Right ventricle myocardium inferior (tissue), 1 donor: ENCODE measurements at regions of chr4 and their contacts with region 1.

Region 1: GRCh38 chr4:121597346-121597934 is 99.3 kb downstream of the ANXA5 start:
- DNase-seq: no peak
- ATAC-seq: no peak

Region 2: DNA sequence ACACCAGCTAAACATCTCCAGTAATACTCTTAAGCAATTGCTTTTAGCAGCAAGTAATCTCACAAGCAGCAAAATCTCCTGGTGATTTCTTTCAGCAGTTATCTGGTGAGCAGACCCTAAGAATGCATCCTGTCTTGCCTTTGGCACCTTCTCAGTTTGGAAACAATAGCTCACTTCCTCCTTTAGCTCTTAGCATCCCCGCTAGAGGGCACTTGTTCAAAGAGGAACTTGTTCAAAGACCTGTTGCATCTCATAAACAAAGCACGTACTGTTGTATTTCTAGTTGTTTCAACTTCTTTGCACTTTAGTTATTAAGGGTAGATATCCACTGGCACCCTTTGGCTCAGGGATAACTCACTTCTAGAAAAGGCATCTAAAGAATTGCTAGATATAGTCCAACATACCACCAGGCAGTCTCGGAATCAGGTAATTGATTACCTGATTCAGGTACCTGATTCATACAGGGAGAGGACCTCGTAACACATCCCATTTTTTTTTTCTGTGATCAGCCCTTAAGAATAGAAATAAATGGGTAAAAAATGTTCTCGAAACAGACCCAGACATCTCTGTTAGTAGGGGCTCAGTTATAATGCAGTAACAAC is 134.7 kb before region 1 on chr4:
- intact Hi-C with region 1: loop called (anchors 5 kb)
- DNase-seq: no peak
- ATAC-seq: no peak

Region 3: GRCh38 chr4:121551881-121552280 is 45.6 kb before region 1 on chr4:
- intact Hi-C with region 1: loop called (anchors 1 kb)
- DNase-seq: no peak
- ATAC-seq: no peak

Region 4: DNA sequence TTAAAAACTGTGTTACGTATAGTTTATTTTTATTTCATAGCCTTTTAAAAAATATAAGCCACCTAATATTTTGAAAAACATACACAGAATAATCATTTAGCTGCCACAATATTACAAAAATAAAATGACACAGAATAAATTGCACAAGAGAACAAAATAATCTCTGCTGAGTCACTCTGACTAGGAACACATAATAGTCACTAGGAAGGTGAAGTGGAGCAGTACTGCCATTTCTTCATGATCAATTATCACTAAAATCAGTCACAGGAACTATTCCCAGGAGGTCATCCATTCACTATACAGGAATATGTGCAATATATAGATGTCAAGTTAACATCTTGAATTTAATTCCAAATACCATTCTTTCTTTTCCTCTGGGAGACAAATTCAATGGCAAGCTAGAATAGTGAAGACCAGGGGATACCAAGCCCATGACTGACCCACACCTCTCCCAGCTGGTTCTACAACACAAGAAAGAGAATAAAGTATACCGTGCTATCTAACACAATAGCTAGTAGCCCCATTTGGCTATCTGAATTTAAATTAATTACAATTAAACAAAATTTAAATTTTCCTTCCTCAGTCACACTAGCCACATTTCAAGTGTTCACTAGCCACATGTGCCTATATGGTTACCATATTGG is 161.6 kb after region 1 on chr4:
- intact Hi-C with region 1: no loop called
- DNase-seq: no peak
- ATAC-seq: no peak